ENCODE measurements at regions of chr16 and their contacts with region 1.

Region 1: GRCh38 chr16:24539850-24540601 is 660 bp downstream of the RBBP6 start:
- H3K4me3 Mint-ChIP-seq: peak overlapping the region; percentile 100
- H3K27ac Mint-ChIP-seq: peak overlapping the region; percentile 100
- H3K4me1 Mint-ChIP-seq: peaks cover 27% of the 10 kb centered on the region
- H3K27me3 Mint-ChIP-seq: no peaks in the 10 kb centered on the region

Region 2: GRCh38 chr16:24729985-24730815 is 190.2 kb after region 1 on chr16:
- intact Hi-C with region 1: loop called (anchors 5 kb)
- H3K4me3 Mint-ChIP-seq: peak overlapping the region; percentile 98
- H3K27ac Mint-ChIP-seq: peak overlapping the region; percentile 94
- H3K4me1 Mint-ChIP-seq: peaks cover 30% of the 10 kb centered on the region
- H3K27me3 Mint-ChIP-seq: peaks cover 5% of the 10 kb centered on the region

Measured in dendritic cell treated with granulocyte-macrophage colony-stimulating factor and Interleukin-4, amounts not matched to agents 40 ng/mL and 50 ng/mL, for 4 days (primary cell).